PC-3 (cell line): ENCODE measurements at regions of chr18 and their contacts with region 1.

Region 1: GRCh38 chr18:79644006-79644665 is 35.5 kb upstream of the CTDP1 start:
- DNase-seq: peak; percentile 75
- ATAC-seq: peak; percentile 91
- H3K4me3 ChIP-seq: no peak overlapping the region
- H3K27ac ChIP-seq: no peak overlapping the region
- H3K4me1 ChIP-seq: no peaks in the 10 kb centered on the region
- H3K27me3 ChIP-seq: no peaks in the 10 kb centered on the region
- CTCF ChIP-seq: peak; percentile 92

Region 2: DNA sequence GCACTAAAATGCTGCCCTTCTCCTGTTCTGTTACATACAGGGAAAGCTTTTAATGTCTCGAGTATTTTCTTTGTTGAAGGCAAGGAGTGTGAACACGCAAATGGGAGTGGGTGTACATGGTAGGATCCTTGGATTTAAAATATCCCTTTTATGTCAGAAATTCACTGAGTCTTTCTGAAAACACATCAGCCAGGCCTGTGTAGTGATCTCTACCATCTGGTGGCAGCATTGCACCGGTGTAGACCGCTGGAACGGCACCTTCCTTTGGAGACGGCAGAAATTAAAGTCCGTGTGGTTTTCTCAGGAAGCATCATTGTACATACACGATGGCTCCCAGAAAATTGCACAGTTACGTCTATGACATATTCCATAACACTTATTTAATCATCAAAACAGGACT is 1878.7 kb before region 1 on chr18:
- CTCF ChIA-PET with region 1: no interaction called
- POLR2A ChIA-PET with region 1: no interaction called
- intact Hi-C with region 1: loop called (anchors 10 kb)
- DNase-seq: peak; percentile 51
- ATAC-seq: peak; percentile 82
- H3K4me3 ChIP-seq: no peak overlapping the region
- H3K27ac ChIP-seq: no peak overlapping the region
- H3K4me1 ChIP-seq: no peaks in the 10 kb centered on the region
- H3K27me3 ChIP-seq: peaks cover 20% of the 10 kb centered on the region
- CTCF ChIP-seq: peak; percentile 68

Region 3: GRCh38 chr18:79378542-79379250 is 265.4 kb before region 1 on chr18:
- CTCF ChIA-PET with region 1: no interaction called
- POLR2A ChIA-PET with region 1: no interaction called
- intact Hi-C with region 1: loop called (anchors 2 kb)
- DNase-seq: peak; percentile 76
- ATAC-seq: peak; percentile 80
- H3K4me3 ChIP-seq: 0 out of 2 replicates have a peak overlapping the region, but pooled peaks have one; percentile 22
- H3K27ac ChIP-seq: no peak overlapping the region
- H3K4me1 ChIP-seq: peaks cover 4% of the 10 kb centered on the region; the same call in 1 of the 2 replicates
- H3K27me3 ChIP-seq: no peaks in the 10 kb centered on the region
- CTCF ChIP-seq: peak; percentile 90

Region 4: DNA sequence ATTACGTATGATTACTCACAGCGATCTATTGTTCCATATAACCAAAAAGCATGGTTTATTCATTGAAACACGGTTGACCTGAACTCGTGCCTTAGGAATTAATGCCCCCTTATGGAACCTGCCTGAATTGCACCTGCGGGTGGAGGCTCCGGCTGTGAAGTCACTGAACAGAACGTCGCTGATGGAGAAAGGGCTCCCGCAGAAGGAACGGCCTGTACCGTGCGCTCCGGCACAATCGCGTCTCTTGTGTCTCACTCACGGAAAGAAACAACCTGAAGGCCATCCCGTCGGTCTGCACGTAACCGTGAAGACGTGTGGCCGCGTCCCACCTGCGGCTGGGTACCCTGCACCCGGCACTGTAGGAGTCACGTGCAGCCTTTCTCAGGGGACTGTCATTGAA is 115.3 kb before region 1 on chr18:
- CTCF ChIA-PET with region 1: no interaction called
- POLR2A ChIA-PET with region 1: no interaction called
- intact Hi-C with region 1: loop called (anchors 1 kb)
- DNase-seq: peak; percentile 78
- ATAC-seq: peak; percentile 84
- H3K4me3 ChIP-seq: no peak overlapping the region
- H3K27ac ChIP-seq: no peak overlapping the region
- H3K4me1 ChIP-seq: no peaks in the 10 kb centered on the region
- H3K27me3 ChIP-seq: no peaks in the 10 kb centered on the region; the same call in 1 of the 2 replicates
- CTCF ChIP-seq: peak; percentile 89